ENCODE measurements at regions of chr17 and their contacts with region 1.

Region 1: GRCh38 chr17:9273428-9274391 is 252.4 kb downstream of the NTN1 start:
- DNase-seq: no peak
- H3K4me3 Mint-ChIP-seq: peak overlapping the region; percentile 18
- H3K27ac Mint-ChIP-seq: peak overlapping the region; percentile 72
- H3K4me1 Mint-ChIP-seq: peaks cover 18% of the 10 kb centered on the region
- H3K27me3 Mint-ChIP-seq: no peaks in the 10 kb centered on the region

Region 2: GRCh38 chr17:9228408-9229151 is 45.1 kb before region 1 on chr17:
- intact Hi-C with region 1: no loop called
- DNase-seq: no peak
- H3K4me3 Mint-ChIP-seq: no peak overlapping the region
- H3K27ac Mint-ChIP-seq: no peak overlapping the region
- H3K4me1 Mint-ChIP-seq: no peaks in the 10 kb centered on the region
- H3K27me3 Mint-ChIP-seq: no peaks in the 10 kb centered on the region

Region 3: DNA sequence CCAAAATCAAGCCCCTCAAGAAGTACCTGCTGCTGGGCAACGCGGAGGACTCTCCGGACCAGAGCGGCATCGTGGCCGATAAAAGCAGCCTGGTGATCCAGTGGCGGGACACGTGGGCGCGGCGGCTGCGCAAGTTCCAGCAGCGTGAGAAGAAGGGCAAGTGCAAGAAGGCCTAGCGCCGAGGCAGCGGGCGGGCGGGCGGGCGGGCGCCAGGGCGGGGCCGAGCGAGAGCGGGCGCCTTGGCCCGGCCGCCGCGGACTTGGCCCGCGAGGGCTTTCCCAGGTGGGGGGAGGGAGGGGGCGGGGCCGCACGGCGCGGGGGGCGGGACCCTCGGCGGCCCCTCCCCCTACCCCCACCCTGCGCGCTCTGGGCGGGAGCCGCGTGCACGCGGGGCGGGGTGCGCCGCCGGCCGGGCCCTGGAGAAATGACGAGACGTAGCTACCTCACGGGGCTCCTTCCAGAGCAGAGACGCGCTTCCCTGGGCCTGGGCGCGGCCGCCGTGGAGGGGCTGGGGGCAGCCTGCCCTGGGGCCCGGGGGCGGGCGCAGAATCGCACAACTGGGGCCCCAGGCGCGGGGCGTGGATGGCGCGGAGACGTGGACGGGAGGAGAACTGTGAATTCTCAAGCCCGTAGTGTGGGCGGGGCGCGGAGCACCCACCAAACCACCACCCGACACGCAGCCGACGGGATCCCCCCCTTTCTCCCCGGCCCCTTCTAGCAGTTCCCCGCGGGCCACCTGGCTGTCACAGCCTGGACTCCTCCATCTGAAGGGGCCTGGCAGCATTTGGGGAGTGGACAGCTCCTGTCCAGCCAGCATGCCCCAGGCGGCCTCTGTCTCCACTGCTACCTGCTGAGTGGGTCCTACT is 33.7 kb before region 1 on chr17:
- intact Hi-C with region 1: loop called (anchors 5 kb)
- DNase-seq: peak; percentile 66
- H3K4me3 Mint-ChIP-seq: peak overlapping the region; percentile 70
- H3K27ac Mint-ChIP-seq: peak overlapping the region; percentile 16
- H3K4me1 Mint-ChIP-seq: peaks cover 11% of the 10 kb centered on the region
- H3K27me3 Mint-ChIP-seq: no peaks in the 10 kb centered on the region

Region 4: DNA sequence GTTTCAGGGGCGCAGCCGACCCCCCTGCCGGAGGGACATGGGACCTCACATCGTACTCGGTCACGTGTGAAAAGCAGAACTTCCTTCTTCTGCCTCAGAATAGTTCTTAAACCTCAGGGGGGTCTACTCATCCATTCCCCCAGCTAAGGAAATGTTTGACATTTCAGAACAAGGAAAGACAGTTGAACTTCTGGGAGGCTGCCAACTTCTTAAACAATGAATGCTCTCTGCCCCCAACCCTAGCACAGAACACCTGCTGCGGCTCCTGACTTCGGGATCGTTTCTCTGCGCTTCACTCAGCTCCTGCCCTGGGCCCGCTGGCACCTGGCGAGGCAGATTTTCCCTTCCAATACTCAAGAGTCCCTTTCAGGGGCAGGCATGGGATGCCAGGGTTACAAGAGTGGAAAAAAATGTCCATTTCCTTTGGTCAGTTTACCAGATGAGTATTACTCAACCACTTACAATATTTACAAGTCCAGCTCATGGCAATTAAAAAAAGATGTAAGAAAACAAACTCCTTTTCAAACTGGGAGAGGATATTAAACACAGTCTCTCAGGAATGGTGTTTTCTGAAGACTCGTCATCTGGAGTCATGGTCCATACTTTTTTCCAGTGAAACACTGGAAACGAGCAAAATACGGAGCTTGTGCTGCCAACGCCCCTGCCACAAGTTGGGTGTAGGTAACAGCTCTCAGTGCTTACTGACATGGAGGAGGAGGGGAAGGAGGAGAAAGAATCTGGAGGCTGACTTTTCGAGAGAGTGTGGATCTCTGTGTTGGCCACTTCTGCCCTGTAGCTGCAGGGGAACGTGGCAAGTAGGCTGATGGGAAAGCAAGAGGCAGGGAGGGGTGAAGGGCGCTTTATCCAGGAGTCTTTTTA is 16.7 kb before region 1 on chr17:
- intact Hi-C with region 1: loop called (anchors 1 kb)
- DNase-seq: no peak
- H3K4me3 Mint-ChIP-seq: no peak overlapping the region
- H3K27ac Mint-ChIP-seq: no peak overlapping the region
- H3K4me1 Mint-ChIP-seq: peaks cover 23% of the 10 kb centered on the region
- H3K27me3 Mint-ChIP-seq: no peaks in the 10 kb centered on the region